Activated CD4-positive, alpha-beta memory T cell treated with anti-CD3 and anti-CD28 coated beads for 36 hours (primary cell): ENCODE measurements at regions of chr5 and their contacts with region 1.

Region 1: DNA sequence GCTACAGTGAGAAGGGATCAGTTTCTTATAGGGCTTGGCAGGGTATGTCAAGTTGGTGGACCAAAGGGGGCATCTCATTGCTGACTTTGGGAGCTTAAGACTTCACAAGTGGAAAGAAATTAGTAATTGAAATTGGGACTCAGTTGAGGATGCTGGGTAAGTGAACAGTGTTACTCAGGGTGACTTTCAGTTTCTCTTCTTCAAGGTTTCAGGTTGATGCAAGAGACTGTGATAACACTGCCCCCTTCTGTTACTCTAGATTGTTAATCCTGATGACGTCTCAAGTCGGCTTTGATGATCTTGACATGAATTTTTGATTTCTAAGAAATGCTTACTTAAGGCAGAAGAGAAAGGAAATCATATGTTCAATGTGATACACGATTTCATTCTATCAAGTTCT is 21.3 kb downstream of the KCTD16 start:
- DNase-seq: no peak
- H3K4me3 Mint-ChIP-seq: no peak overlapping the region
- H3K27ac Mint-ChIP-seq: no peak overlapping the region
- H3K4me1 Mint-ChIP-seq: peaks cover 31% of the 10 kb centered on the region
- H3K27me3 Mint-ChIP-seq: no peaks in the 10 kb centered on the region

Region 2: DNA sequence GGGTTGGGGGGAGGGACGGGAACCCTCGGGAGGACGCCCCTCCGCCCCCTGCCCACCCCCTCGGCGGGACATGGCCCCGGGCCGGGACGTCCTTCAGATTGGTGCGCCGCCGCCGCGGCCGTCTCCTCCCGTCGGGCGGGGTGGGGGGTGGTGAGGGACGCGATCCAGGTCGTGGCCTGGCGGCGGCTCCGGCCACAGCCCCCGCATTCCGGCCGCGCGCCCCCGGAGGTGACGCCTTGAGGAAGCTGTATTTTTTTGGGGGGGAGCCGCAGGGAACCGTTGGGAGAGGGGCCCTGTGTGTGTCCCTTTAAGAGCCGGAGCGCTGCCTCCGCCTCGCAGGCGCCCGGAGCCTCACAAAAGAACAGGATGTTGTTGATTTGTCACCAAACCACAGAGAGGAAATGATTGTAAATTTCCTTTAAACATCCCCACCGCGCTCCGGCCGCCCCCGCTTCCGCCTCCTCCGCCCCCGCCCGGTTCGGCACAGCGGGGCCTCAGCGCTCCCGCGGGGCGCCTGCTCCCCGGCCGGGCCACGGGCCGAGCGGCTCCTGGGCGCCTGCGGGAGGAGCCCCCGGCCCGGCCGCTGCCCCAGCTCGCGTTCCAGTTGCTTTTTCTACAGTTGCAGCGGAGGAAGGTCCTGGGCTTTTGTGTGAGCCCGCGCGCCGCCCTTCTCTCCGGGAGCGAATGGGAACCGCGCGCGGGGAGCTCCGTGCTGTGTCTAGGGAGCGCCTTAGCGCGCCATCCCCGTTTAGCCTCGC is 1835.1 kb before region 1 on chr5:
- CTCF ChIA-PET with region 1: no interaction called
- POLR2A ChIA-PET with region 1: no interaction called
- intact Hi-C with region 1: loop called (anchors 10 kb)
- DNase-seq: peak; percentile 95
- H3K4me3 Mint-ChIP-seq: peak overlapping the region; percentile 71
- H3K27ac Mint-ChIP-seq: peak overlapping the region; percentile 91
- H3K4me1 Mint-ChIP-seq: peaks cover 38% of the 10 kb centered on the region
- H3K27me3 Mint-ChIP-seq: no peaks in the 10 kb centered on the region

Region 3: GRCh38 chr5:143182901-143183820 is 1008.8 kb before region 1 on chr5:
- CTCF ChIA-PET with region 1: no interaction called
- POLR2A ChIA-PET with region 1: no interaction called
- intact Hi-C with region 1: loop called (anchors 10 kb)
- DNase-seq: peak; percentile 89
- H3K4me3 Mint-ChIP-seq: peak overlapping the region; percentile 57
- H3K27ac Mint-ChIP-seq: peak overlapping the region; percentile 90
- H3K4me1 Mint-ChIP-seq: peaks cover 56% of the 10 kb centered on the region
- H3K27me3 Mint-ChIP-seq: no peaks in the 10 kb centered on the region

Region 4: GRCh38 chr5:143435210-143435657 is 756.8 kb before region 1 on chr5:
- CTCF ChIA-PET with region 1: no interaction called
- POLR2A ChIA-PET with region 1: no interaction called
- intact Hi-C with region 1: loop called (anchors 2 kb)
- DNase-seq: peak; percentile 51
- H3K4me3 Mint-ChIP-seq: peak overlapping the region; percentile 81
- H3K27ac Mint-ChIP-seq: peak overlapping the region; percentile 87
- H3K4me1 Mint-ChIP-seq: peaks cover 68% of the 10 kb centered on the region
- H3K27me3 Mint-ChIP-seq: no peaks in the 10 kb centered on the region

Region 5: GRCh38 chr5:143791848-143792731 is 399.9 kb before region 1 on chr5:
- CTCF ChIA-PET with region 1: no interaction called
- POLR2A ChIA-PET with region 1: no interaction called
- intact Hi-C with region 1: no loop called
- DNase-seq: no peak
- H3K4me3 Mint-ChIP-seq: no peak overlapping the region
- H3K27ac Mint-ChIP-seq: no peak overlapping the region
- H3K4me1 Mint-ChIP-seq: peaks cover 6% of the 10 kb centered on the region
- H3K27me3 Mint-ChIP-seq: peaks cover 2% of the 10 kb centered on the region

Region 6: DNA sequence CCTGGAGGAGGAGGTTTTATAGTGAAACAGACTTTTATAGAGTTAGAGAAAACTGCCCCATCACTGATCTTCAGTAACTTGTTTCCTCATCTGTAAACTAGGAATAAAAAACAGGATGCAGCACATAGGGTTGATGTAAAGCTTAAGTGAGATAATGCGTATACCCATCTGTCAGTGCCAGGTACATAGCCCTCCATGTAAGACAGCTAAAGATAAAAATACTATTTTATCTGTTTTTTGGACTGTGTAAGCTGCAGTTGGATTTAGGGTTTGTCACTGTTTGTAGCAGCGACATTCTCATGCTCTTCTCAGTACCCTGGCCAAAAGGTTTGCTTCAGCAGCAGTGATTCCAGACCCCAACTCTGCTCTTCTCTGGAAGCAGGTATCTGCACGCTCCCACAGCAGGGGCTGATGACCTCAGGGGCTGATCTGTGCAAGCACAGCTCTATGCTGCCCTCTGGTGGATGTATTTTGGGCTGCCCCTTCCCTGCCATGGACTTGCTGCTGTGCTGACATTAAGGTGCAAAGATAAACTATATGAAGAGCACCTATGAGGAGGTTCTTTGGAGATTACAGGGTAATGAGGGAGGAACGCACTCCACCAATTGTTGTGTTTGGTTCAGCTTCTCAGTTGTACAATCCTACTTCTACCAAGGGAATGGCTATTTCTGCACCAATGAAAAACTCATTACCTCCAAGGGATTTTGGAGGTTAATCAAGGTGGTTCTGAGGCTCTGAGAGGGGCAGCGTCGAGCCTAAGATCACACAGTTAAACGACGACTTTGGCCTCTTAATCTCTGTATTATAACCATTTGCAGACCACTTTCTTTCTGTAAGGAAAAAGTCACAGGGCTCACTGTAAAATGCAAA is 366.9 kb before region 1 on chr5:
- CTCF ChIA-PET with region 1: no interaction called
- POLR2A ChIA-PET with region 1: no interaction called
- intact Hi-C with region 1: loop called (anchors 1 kb)
- DNase-seq: peak; percentile 89
- H3K4me3 Mint-ChIP-seq: no peak overlapping the region
- H3K27ac Mint-ChIP-seq: no peak overlapping the region
- H3K4me1 Mint-ChIP-seq: peaks cover 22% of the 10 kb centered on the region
- H3K27me3 Mint-ChIP-seq: peaks cover 3% of the 10 kb centered on the region

Region 7: GRCh38 chr5:144170276-144171024 is 21.5 kb before region 1 on chr5 and contains the starts of genes KCTD16 and YIPF5:
- CTCF ChIA-PET with region 1: interaction called, 8 read pairs
- POLR2A ChIA-PET with region 1: interaction called, 10 read pairs
- intact Hi-C with region 1: loop called (anchors 1 kb)
- DNase-seq: peak; percentile 99
- H3K4me3 Mint-ChIP-seq: peak within 1 kb of the TSS; percentile 99
- H3K27ac Mint-ChIP-seq: peak within 1 kb of the TSS; percentile 93
- H3K4me1 Mint-ChIP-seq: peaks cover 49% of the 10 kb centered on the region
- H3K27me3 Mint-ChIP-seq: no peaks in the 10 kb centered on the region
- total RNA-seq, gene KCTD16: 0.24 to 0.27 TPM
- total RNA-seq, gene YIPF5: 41.4 to 42.1 TPM

Region 8: GRCh38 chr5:144352330-144352729 is 160.3 kb after region 1 on chr5:
- CTCF ChIA-PET with region 1: no interaction called
- POLR2A ChIA-PET with region 1: no interaction called
- intact Hi-C with region 1: no loop called
- DNase-seq: no peak
- H3K4me3 Mint-ChIP-seq: no peak overlapping the region
- H3K27ac Mint-ChIP-seq: no peak overlapping the region
- H3K4me1 Mint-ChIP-seq: no peaks in the 10 kb centered on the region
- H3K27me3 Mint-ChIP-seq: no peaks in the 10 kb centered on the region